H1 (cell line): ENCODE measurements at regions of chr2 and their contacts with region 1.

Region 1: DNA sequence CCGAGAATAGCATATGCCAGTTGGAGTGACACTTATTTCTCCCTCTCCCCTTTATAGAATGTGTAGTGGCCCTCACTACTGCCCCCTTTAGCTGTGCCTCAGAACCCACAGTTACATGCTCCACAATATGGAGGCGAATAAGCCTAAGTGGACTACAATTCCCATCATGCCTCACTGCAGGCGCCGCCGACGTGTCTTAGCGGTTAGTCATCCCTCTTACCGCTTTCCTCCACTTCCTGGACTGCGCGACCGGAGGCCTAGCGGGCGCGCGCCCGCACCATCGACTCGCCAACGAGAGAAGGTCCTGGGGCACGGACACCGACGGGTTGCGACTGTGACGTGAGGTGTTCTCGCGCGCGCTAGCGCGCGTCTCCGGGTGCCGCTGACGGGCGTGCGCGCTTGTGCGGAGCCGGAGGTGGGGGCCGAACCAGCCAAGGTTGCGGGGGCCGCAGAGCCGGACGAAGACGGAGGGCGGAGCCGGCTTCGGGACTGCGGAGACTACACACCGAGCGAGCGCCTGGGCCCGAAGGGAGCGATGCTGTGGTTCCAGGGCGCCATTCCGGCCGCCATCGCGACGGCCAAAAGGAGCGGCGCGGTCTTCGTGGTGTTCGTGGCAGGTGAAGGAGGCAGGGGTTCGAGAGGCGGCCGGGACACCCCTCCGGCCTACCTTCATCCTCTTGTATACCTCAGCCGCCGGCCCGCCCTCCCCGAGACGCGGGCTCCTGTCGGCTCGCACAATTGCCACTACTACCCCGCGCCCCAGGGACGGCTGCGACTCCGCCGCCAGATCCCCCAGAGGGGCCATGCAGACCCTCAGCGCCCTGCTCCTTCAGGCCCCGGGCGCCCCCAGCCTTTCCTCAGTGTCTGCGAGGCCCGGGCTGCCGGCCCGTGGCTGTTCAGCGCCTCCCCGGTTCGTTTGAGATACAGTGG is at the start of gene UBXN4:
- DNase-seq: peak; percentile 91 to 98
- H3K4me3 ChIP-seq: peak within 1 kb of the TSS; percentile 81 to 98 (median 94)
- H3K27ac ChIP-seq: peak within 1 kb of the TSS; percentile 86
- H3K4me1 ChIP-seq: peaks cover 0 to 6% (median 3%) of the 10 kb centered on the region in 4 experiments; a peak in 2 of 7 replicates
- H3K27me3 ChIP-seq: no peaks in the 10 kb centered on the region
- CTCF ChIP-seq: peak; percentile 37 to 92 (median 55)
- EP300 ChIP-seq: no peak
- POLR2A ChIP-seq: peak; percentile 60 to 94
- RAD21 ChIP-seq: peak in 1 of 2 experiments; percentile 22; a peak in 1 of 4 replicates
- total RNA-seq, gene UBXN4: 64.2 and 66.0 TPM in 2 replicates

Region 2: DNA sequence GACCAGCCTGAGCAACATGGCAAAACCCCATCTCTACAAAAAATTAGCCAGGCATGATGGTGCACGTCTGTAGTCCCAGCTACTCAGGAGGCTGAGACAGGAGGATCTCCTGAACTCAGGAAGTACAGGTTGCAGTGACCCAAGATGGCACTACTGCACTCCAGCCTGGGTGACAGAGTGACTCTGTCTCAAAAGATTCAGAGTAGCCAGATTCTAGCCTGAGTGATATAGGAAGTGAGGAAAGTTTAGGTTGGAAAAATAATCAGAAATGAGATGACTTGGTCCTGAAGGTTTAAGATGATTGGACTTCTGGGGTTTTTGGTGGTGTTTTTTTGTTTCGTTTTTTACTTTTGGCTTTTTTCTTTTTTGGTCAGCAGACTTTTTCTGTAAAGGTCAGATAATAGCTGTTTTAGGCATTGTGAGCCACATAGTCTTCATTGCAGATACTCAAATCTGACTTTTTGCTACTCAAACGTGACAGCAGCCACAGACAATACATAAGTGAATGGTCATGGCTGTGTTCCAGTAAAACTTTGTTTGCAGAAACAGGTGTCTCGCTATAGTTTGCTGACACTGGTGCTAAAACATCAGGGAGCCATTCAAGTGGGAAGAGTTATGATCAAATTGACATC is 104.1 kb before region 1 on chr2:
- CTCF ChIA-PET with region 1: no interaction called
- POLR2A ChIA-PET with region 1: no interaction called
- DNase-seq: no peak
- H3K4me3 ChIP-seq: no peak overlapping the region
- H3K27ac ChIP-seq: no peak overlapping the region
- H3K4me1 ChIP-seq: no peaks in the 10 kb centered on the region
- H3K27me3 ChIP-seq: no peaks in the 10 kb centered on the region
- CTCF ChIP-seq: no peak
- EP300 ChIP-seq: no peak
- POLR2A ChIP-seq: no peak
- RAD21 ChIP-seq: no peak

Region 3: GRCh38 chr2:135728064-135728743 is 13.5 kb before region 1 on chr2:
- CTCF ChIA-PET with region 1: interaction called, 19 read pairs
- POLR2A ChIA-PET with region 1: interaction called, 6 read pairs
- DNase-seq: no peak
- H3K4me3 ChIP-seq: no peak overlapping the region
- H3K27ac ChIP-seq: no peak overlapping the region
- H3K4me1 ChIP-seq: no peaks in the 10 kb centered on the region
- H3K27me3 ChIP-seq: no peaks in the 10 kb centered on the region
- CTCF ChIP-seq: no peak
- EP300 ChIP-seq: no peak
- POLR2A ChIP-seq: no peak
- RAD21 ChIP-seq: no peak